ENCODE measurements at regions of chr10 and their contacts with region 1.

Region 1: GRCh38 chr10:103069453-103070331 is 123.4 kb downstream of the NT5C2 start:
- DNase-seq: peak; percentile 36
- H3K4me3 ChIP-seq: no peak overlapping the region
- H3K27ac ChIP-seq: no peak overlapping the region
- H3K4me1 ChIP-seq: no peaks in the 10 kb centered on the region
- H3K27me3 ChIP-seq: no peaks in the 10 kb centered on the region
- CTCF ChIP-seq: peak; percentile 70

Region 2: DNA sequence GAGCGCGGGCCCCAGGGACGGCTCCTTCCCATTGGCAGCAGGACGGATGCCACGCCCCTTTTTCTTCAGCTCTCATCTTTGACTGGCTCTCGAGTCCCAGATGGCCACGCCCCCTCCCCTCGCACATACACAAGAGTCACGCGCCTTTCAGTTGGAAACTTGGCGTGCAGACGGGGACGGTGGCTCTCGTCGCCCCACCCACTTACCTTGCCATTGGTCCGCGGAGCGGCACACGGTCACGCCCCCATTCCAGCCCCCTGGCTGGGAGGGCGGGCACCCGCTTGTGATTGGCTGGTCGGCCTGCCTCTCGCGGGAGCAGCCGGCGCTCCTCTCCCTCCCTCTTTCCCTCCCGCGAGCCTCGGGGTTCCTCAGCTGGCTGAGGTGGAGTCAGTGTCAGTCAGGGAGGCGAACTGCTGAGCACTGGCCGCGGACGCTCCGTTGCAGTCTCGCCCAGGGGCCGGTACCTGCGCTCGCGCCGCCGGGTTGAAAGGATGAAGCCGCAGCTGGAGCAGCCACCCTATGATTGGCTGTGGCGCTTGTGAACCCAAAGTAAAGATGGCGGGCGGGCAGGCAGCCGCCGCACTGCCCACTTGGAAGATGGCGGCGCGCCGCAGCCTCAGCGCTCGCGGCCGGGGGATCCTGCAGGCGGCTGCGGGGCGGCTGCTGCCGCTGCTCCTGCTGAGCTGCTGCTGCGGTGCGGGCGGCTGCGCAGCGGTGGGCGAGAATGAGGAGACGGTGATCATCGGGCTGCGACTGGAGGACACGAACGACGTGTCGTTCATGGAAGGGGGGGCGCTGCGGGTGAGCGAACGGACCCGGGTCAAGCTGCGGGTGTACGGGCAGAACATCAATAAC is 151.5 kb before region 1 on chr10 and contains the start of gene CNNM2:
- intact Hi-C with region 1: loop called (anchors 5 kb)
- DNase-seq: peak; percentile 100
- H3K4me3 ChIP-seq: peak within 1 kb of the TSS; percentile 98
- H3K27ac ChIP-seq: peak within 1 kb of the TSS; percentile 88
- H3K4me1 ChIP-seq: peaks cover 63% of the 10 kb centered on the region
- H3K27me3 ChIP-seq: no peaks in the 10 kb centered on the region
- CTCF ChIP-seq: no peak
- total RNA-seq, gene CNNM2: 3.3 TPM

Region 3: DNA sequence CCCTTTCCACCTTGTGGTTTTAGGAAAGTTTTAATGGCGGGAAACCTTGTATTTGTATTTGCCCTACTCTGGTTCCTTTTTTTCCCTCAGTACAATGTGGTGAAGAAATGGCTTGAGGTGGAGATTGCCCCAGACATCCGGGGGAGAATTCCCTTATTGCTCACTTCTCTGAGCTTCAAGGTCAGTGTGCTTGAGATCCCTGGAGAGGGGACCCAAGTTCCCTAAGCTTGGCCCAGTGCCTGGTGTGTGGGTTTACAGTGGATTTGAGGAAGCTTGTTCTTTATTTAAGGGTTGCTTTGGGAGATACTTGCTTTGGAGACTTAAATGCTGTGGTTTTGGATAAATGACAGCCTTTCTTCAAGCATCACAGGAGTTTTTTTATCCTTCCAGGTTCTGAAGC is 364.2 kb after region 1 on chr10:
- intact Hi-C with region 1: no loop called
- DNase-seq: peak; percentile 56
- H3K4me3 ChIP-seq: no peak overlapping the region
- H3K27ac ChIP-seq: peak overlapping the region; percentile 33
- H3K4me1 ChIP-seq: peaks cover 8% of the 10 kb centered on the region
- H3K27me3 ChIP-seq: no peaks in the 10 kb centered on the region
- CTCF ChIP-seq: no peak